Right ventricle myocardium superior (tissue), 1 donor: ENCODE measurements at regions of chr1 and their contacts with region 1.

Region 1: GRCh38 chr1:68120136-68120791 is 69.8 kb upstream of the DIRAS3 start:
- DNase-seq: no peak
- ATAC-seq: peak; percentile 74

Region 2: DNA sequence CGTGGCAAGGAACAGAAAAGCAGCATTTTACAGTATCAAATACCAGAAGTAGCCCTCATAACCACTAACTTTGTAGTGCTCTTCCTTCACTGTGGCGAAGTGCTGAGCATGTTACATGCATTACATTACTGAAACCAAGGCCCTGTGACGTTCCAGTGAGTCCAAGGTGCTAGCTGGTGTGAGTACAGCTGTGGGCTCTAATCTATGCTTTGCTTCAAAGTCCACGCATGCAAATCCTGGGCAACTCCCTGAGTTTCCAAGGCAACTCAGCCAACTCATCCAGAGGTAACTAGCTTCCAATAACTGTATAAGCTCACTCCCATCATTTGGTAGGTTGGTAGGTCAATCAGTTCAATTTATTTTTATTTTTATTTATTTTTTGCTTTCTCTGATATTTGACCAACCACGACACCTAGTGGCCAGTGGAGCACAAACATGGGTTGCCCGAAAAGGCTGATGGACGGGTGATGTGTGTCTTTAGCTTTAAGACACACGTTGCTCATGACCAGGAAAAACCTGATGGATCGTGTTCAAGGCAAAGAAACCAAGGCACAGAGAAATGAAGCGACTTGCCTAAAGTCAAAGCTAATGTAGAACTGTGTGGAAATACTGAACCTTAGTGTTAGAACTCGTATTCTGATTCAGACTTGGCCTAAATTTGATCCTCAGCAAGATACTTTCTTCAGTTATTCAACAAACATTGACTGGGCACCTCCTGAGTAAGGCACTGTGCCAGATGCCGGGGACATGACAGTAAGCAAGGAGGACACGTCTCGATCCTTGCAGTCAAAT is 360.0 kb before region 1 on chr1:
- intact Hi-C with region 1: loop called (anchors 10 kb)
- DNase-seq: peak; percentile 59
- ATAC-seq: peak; percentile 80

Region 3: DNA sequence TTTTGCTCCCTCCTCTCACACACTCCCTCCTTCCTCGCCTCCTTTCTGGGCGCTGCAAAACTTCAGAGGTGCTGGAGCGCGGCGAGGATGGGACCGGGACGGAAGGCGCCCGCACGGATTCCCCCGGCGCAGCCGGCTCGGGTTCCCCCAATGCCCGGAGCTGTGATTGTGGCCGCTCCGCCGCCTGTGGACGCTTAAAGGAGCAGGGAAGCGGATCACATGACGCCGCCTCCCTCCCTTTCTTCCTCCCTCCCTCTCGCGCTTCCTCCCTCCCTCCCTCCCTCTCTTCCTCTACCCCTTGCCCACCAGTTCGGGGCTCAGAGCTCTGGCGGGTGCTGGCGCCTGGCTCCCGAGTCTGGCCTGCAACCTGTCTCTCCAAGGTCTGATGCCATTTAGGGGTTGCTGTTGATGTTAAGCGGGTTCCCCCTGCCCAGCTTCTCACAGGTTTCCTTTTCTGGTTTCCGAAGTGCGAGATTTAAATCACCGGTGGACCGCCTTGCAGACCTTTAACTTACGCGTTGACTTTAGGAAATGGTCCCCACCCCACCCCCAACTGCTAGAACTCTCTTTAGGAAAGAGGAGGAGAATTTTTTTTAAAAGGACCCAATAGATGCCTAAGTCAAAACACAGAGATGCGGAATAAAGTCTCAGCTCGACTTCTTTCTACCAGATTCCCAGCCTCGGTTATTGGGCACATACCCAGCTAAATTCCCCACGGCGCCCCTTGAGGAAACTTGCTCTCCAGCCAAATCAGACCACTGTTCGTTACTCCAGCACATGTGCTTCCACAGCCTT is 112.3 kb after region 1 on chr1 and contains the start of gene WLS:
- intact Hi-C with region 1: loop called (anchors 5 kb)
- DNase-seq: peak; percentile 91
- ATAC-seq: peak; percentile 89
- total RNA-seq, gene WLS: 93.2 TPM

Region 4: DNA sequence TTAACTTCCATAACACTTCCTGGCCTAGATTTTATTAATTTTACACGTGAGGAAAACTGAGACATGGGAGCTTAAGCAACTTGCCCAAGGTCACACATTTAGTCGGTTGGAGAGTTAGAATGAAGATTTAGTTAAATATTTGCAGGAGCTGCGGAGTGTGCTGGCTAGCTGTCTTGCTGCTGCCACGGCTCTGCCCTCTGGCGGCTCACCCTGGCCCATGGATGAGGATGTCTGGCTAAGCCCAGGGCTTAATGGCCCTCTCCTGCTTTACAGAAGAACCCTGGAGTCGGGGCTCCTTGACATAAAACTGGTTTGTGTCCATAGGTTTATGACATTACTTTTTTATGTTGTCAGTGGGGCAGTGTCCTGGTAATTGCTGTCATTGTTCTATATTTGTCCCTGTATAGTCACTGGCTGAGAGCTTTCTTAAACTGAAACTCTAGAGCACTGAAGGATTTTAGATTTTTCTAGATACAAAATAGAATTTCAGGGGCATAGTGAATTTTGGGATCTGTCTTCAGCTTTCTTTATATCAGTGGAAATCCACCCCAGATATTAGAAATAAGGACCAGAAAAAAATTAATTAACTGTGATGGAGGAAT is 200.9 kb after region 1 on chr1:
- intact Hi-C with region 1: loop called (anchors 5 kb)
- DNase-seq: peak; percentile 76
- ATAC-seq: peak; percentile 94

Region 5: GRCh38 chr1:68346188-68346808 is 226.0 kb after region 1 on chr1:
- intact Hi-C with region 1: loop called (anchors 2 kb)
- DNase-seq: no peak
- ATAC-seq: peak; percentile 35